ENCODE measurements at regions of chr9 and their contacts with region 1.

Region 1: GRCh38 chr9:132756214-132756845 is 86.1 kb downstream of the GTF3C4 start:
- DNase-seq: no peak
- H3K4me3 ChIP-seq: no peak overlapping the region
- CTCF ChIP-seq: no peak

Region 2: DNA sequence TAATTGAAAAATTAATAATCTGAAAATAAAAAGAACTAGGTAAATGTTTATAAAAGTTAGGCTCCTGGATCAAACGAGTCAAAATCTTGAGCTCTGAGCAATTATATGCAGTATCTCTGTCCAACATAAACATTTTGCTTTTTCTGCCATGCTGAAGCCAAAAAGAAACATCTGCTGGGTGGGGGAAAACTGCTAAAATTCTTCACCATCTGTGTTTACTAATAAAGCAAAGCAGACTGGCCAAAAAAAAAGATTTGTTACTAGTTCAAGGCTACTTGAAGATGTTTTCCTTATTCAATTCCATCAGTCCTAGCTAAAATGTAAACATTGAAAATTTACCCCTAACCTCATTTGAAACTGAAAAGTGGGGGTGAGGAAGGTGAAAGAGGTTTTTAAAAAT is 56.4 kb before region 1 on chr9:
- in situ Hi-C with region 1: loop called (anchors 5 kb)
- DNase-seq: no peak
- H3K4me3 ChIP-seq: no peak overlapping the region
- CTCF ChIP-seq: no peak

Measured in astrocyte of the cerebellum (primary cell).